T-cell (primary cell): ENCODE measurements at regions of chr7 and their contacts with region 1.

Region 1: DNA sequence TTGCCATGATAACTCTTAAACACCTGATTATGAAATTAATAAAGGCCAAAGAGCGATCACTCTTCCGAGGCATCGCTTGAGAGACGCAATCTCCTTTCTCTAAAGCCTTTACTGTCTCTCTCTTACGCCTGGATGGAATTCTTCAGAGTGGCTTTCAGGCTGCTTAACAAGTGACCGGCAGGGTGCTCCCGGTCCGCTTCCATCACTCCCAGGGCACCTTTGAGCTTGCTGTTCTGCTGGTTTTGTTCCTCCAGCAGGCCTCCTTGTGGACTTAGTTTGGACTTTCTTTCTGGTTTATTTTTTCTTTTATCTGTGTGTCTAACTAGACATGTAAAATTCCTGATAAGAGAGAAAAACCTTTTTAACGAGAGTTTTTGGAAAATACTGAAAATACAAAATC is 60.9 kb downstream of the MRPL32 start:
- DNase-seq: no peak
- ATAC-seq: no peak
- H3K4me3 ChIP-seq: no peak overlapping the region
- H3K4me3 Mint-ChIP-seq: no peak overlapping the region
- H3K27ac ChIP-seq: no peak overlapping the region
- H3K27ac Mint-ChIP-seq: no peak overlapping the region
- H3K4me1 ChIP-seq: no peaks in the 10 kb centered on the region
- H3K4me1 Mint-ChIP-seq: no peaks in the 10 kb centered on the region
- H3K27me3 ChIP-seq: peaks cover 0 to 12% of the 10 kb centered on the region in 2 experiments
- H3K27me3 Mint-ChIP-seq: peaks cover 14 to 28% of the 10 kb centered on the region in 2 donors

Region 2: DNA sequence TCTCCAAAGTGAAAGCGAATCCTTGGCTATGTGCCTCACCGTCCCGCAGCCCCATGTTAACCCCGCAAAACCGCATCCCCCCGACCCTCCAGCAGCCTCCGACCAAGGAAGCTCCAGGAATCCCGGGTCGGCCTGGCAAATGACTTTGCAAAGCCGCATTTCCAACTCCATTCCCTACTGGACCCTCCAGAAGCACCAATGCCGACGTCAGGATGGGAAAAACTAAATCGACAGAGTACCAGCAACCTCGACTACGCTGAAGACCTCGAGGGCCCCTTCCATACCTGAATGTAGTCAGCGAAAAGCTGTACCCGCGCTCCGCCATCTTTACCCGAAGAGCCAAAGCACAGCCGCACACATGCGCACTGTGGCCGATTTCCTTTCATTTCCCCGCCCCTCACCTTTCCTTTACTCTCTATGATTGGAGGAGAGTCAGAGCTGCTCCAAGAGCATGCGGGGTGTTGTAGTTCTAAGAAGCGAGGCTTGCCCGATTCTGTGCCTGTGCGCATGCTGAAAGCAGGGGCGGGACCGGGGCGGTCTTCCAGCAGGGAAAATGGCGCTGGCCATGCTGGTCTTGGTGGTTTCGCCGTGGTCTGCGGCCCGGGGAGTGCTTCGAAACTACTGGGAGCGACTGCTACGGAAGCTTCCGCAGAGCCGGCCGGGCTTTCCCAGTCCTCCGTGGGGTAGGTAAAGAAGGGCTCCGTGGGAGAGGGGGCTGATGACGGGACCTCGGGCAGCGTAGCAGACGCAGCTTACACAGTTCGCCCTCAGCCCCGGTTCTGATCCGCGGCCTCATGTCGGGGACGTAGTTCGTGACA is 61.0 kb before region 1 on chr7 and contains the starts of genes MRPL32 and PSMA2:
- CTCF ChIA-PET with region 1: no interaction called
- POLR2A ChIA-PET with region 1: interaction called in 1 of 2 experiments, 10 read pairs
- DNase-seq: peak; percentile 81 to 98 (median 94)
- ATAC-seq: peak; percentile 99 to 100 (median 100)
- H3K4me3 ChIP-seq: peak within 1 kb of the TSS; percentile 85 to 100
- H3K4me3 Mint-ChIP-seq: peak within 1 kb of the TSS; percentile 97 to 100 (median 99)
- H3K27ac ChIP-seq: peak within 1 kb of the TSS; percentile 86
- H3K27ac Mint-ChIP-seq: peak within 1 kb of the TSS; percentile 98
- H3K4me1 ChIP-seq: peaks cover 23 to 24% of the 10 kb centered on the region in 2 experiments
- H3K4me1 Mint-ChIP-seq: peaks cover 67 to 77% (median 76%) of the 10 kb centered on the region in 3 donors
- H3K27me3 ChIP-seq: no peaks in the 10 kb centered on the region
- H3K27me3 Mint-ChIP-seq: no peaks in the 10 kb centered on the region
- total RNA-seq, gene MRPL32: 37.0 to 46.6 (median 40.8) TPM
- total RNA-seq, gene PSMA2: 37.0 to 50.5 (median 43.7) TPM